ENCODE measurements at regions of chr2 and their contacts with region 1.

Region 1: GRCh38 chr2:120231974-120232635 is 8.9 kb upstream of the TMEM185B start:
- DNase-seq: peak; percentile 29 to 85 (median 54)
- ATAC-seq: peak; percentile 88 to 93 (median 89)
- H3K4me3 ChIP-seq: peak overlapping the region; percentile 68 to 76
- H3K4me3 Mint-ChIP-seq: peak overlapping the region; percentile 93 to 96 (median 93)
- H3K27ac ChIP-seq: peak overlapping the region; percentile 95
- H3K27ac Mint-ChIP-seq: peak overlapping the region; percentile 95 to 97
- H3K4me1 ChIP-seq: peaks cover 29 to 37% of the 10 kb centered on the region in 2 experiments
- H3K4me1 Mint-ChIP-seq: peaks cover 59 to 63% (median 62%) of the 10 kb centered on the region in 3 donors
- H3K27me3 ChIP-seq: peaks cover 0 to 2% of the 10 kb centered on the region in 2 experiments
- H3K27me3 Mint-ChIP-seq: no peaks in the 10 kb centered on the region

Region 2: GRCh38 chr2:119914266-119914665 is 317.8 kb before region 1 on chr2:
- CTCF ChIA-PET with region 1: no interaction called
- POLR2A ChIA-PET with region 1: interaction called in 1 of 2 experiments, 10 read pairs
- DNase-seq: no peak
- ATAC-seq: no peak
- H3K4me3 ChIP-seq: no peak overlapping the region
- H3K4me3 Mint-ChIP-seq: no peak overlapping the region
- H3K27ac ChIP-seq: no peak overlapping the region
- H3K27ac Mint-ChIP-seq: no peak overlapping the region
- H3K4me1 ChIP-seq: no peaks in the 10 kb centered on the region
- H3K4me1 Mint-ChIP-seq: peaks cover 0 to 2% (median 0%) of the 10 kb centered on the region in 3 donors
- H3K27me3 ChIP-seq: no peaks in the 10 kb centered on the region
- H3K27me3 Mint-ChIP-seq: no peaks in the 10 kb centered on the region

Region 3: GRCh38 chr2:120189189-120189588 is 42.9 kb before region 1 on chr2:
- CTCF ChIA-PET with region 1: no interaction called
- POLR2A ChIA-PET with region 1: no interaction called
- DNase-seq: no peak
- ATAC-seq: no peak
- H3K4me3 ChIP-seq: no peak overlapping the region
- H3K4me3 Mint-ChIP-seq: no peak overlapping the region
- H3K27ac ChIP-seq: no peak overlapping the region
- H3K27ac Mint-ChIP-seq: no peak overlapping the region
- H3K4me1 ChIP-seq: no peaks in the 10 kb centered on the region
- H3K4me1 Mint-ChIP-seq: no peaks in the 10 kb centered on the region
- H3K27me3 ChIP-seq: no peaks in the 10 kb centered on the region
- H3K27me3 Mint-ChIP-seq: peaks cover 0 to 5% of the 10 kb centered on the region in 2 donors

Region 4: GRCh38 chr2:120252225-120253021 is 20.3 kb after region 1 on chr2 and contains the start of gene RALB:
- CTCF ChIA-PET with region 1: interaction called, 7 to 12 read pairs
- POLR2A ChIA-PET with region 1: interaction called, 3 to 8 read pairs
- DNase-seq: peak; percentile 96 to 99 (median 98)
- ATAC-seq: peak; percentile 94 to 97 (median 96)
- H3K4me3 ChIP-seq: peak within 1 kb of the TSS; percentile 82 to 97
- H3K4me3 Mint-ChIP-seq: peak within 1 kb of the TSS; percentile 98 to 100 (median 100)
- H3K27ac ChIP-seq: peak within 1 kb of the TSS; percentile 59
- H3K27ac Mint-ChIP-seq: peak within 1 kb of the TSS; percentile 96
- H3K4me1 ChIP-seq: peaks cover 6 to 16% of the 10 kb centered on the region in 2 experiments
- H3K4me1 Mint-ChIP-seq: peaks cover 44 to 50% (median 45%) of the 10 kb centered on the region in 3 donors
- H3K27me3 ChIP-seq: peaks cover 0 to 7% of the 10 kb centered on the region in 2 experiments
- H3K27me3 Mint-ChIP-seq: peaks cover 10% of the 10 kb centered on the region in 2 donors
- total RNA-seq, gene RALB: 10.3 to 20.1 (median 12.9) TPM

Region 5: DNA sequence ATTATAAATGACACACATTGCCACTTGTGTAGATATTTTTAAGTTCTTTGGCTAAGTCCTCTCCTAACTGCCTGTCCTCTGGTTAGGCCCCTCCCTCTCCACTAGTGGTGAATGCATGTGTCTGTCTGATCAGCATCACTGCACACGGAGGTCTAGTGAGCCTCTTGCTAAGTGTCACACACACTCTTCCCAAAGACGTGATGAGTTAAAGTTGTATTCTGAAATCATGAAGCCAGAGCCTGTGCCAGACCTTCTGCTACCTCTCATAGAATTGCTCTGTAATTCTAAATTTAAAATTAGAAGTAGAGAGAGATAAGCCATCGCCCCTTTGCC is 61.9 kb after region 1 on chr2:
- CTCF ChIA-PET with region 1: no interaction called
- POLR2A ChIA-PET with region 1: no interaction called
- DNase-seq: no peak
- ATAC-seq: no peak
- H3K4me3 ChIP-seq: no peak overlapping the region
- H3K4me3 Mint-ChIP-seq: no peak overlapping the region
- H3K27ac ChIP-seq: no peak overlapping the region
- H3K27ac Mint-ChIP-seq: no peak overlapping the region
- H3K4me1 ChIP-seq: peaks cover 0 to 15% of the 10 kb centered on the region in 2 experiments
- H3K4me1 Mint-ChIP-seq: peaks cover 3 to 10% (median 8%) of the 10 kb centered on the region in 3 donors
- H3K27me3 ChIP-seq: no peaks in the 10 kb centered on the region
- H3K27me3 Mint-ChIP-seq: no peaks in the 10 kb centered on the region

Measured in T-cell (primary cell).